ENCODE measurements at regions of chr14 and their contacts with region 1.

Region 1: GRCh38 chr14:50719911-50720759 is 52.0 kb upstream of the SAV1 start:
- DNase-seq: no peak
- ATAC-seq: no peak
- H3K4me3 ChIP-seq: no peak overlapping the region
- H3K4me3 Mint-ChIP-seq: no peak overlapping the region
- H3K27ac ChIP-seq: no peak overlapping the region
- H3K27ac Mint-ChIP-seq: peak overlapping the region; percentile 33
- H3K4me1 ChIP-seq: no peaks in the 10 kb centered on the region
- H3K4me1 Mint-ChIP-seq: peaks cover 2% of the 10 kb centered on the region
- H3K27me3 ChIP-seq: no peaks in the 10 kb centered on the region
- H3K27me3 Mint-ChIP-seq: no peaks in the 10 kb centered on the region
- CTCF ChIP-seq: no peak

Region 2: DNA sequence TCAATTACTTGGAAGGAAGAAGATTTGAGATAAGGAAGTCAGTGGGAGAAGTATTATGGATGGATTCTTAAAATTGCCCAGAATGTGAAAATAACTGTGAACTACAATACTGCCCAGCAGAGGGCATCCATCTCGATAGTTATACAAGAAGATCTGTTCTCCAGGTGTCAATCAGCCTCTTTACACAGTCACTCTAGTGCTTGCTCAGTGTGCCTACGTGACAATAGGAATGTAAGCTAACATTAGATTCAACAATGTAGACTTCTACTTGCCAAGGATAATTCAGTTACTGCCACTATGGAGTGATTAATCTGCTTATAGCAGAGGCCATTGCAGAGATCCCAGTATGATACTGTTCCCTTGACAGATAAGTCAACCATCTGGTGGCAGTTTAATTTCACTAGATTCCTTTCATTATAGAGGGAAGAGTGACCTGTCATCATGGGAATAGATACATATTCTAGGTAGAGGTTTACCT is 177.2 kb before region 1 on chr14:
- CTCF ChIA-PET with region 1: interaction called, 3 read pairs
- POLR2A ChIA-PET with region 1: no interaction called
- intact Hi-C with region 1: loop called (anchors 2 to 10 kb)
- DNase-seq: peak in 6 of 9 experiments; percentile 19 to 70 (median 28)
- ATAC-seq: peak; percentile 81
- H3K4me3 ChIP-seq: no peak overlapping the region
- H3K4me3 Mint-ChIP-seq: no peak overlapping the region
- H3K27ac ChIP-seq: no peak overlapping the region
- H3K27ac Mint-ChIP-seq: no peak overlapping the region
- H3K4me1 ChIP-seq: peaks cover 5% of the 10 kb centered on the region
- H3K4me1 Mint-ChIP-seq: peaks cover 11% of the 10 kb centered on the region
- H3K27me3 ChIP-seq: no peaks in the 10 kb centered on the region
- H3K27me3 Mint-ChIP-seq: no peaks in the 10 kb centered on the region
- CTCF ChIP-seq: peak; percentile 47

Region 3: GRCh38 chr14:50667996-50668825 is 51.9 kb before region 1 on chr14 and contains the start of gene SAV1:
- CTCF ChIA-PET with region 1: no interaction called
- POLR2A ChIA-PET with region 1: no interaction called
- intact Hi-C with region 1: loop called in 1 of 2 experiments (anchors 5 kb)
- DNase-seq: peak; percentile 13 to 71 (median 42)
- ATAC-seq: peak; percentile 38
- H3K4me3 ChIP-seq: peak within 1 kb of the TSS; percentile 55 to 60
- H3K4me3 Mint-ChIP-seq: no peak within 1 kb of the TSS
- H3K27ac ChIP-seq: peak within 1 kb of the TSS in 1 of 2 experiments; percentile 52
- H3K27ac Mint-ChIP-seq: peak within 1 kb of the TSS; percentile 84
- H3K4me1 ChIP-seq: peaks cover 16% of the 10 kb centered on the region
- H3K4me1 Mint-ChIP-seq: peaks cover 20% of the 10 kb centered on the region
- H3K27me3 ChIP-seq: no peaks in the 10 kb centered on the region
- H3K27me3 Mint-ChIP-seq: no peaks in the 10 kb centered on the region
- CTCF ChIP-seq: no peak
- total RNA-seq, gene SAV1: 13.1 to 13.4 TPM

Region 4: DNA sequence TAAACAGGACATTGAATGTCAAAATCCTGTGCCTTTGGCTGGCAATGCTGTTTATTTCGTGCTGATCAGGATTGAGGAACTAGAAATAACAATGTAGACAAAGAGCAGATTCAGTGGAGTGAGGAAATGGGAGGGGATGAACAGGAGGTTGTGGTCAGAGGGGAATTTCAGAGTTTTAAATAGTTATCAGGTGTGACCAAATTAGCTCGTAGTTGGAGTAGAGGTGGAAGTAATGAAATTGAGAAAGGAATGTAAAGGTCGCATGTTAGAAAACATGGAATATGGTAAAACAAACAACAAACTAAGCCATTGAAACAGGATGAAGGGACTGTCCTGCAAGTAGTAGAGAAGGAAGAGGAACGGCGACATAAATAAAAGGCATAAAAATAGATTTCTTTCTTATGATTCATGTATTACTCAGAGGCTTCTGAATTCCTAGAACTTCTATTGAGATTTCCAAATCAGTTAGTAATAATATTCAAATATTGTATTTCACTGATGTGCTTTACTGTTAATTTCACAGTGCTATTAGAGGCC is 42.5 kb before region 1 on chr14:
- CTCF ChIA-PET with region 1: no interaction called
- POLR2A ChIA-PET with region 1: no interaction called
- intact Hi-C with region 1: loop called in 1 of 2 experiments (anchors 1 kb)
- DNase-seq: peak in 1 of 9 experiments; percentile 17
- ATAC-seq: no peak
- H3K4me3 ChIP-seq: no peak overlapping the region
- H3K4me3 Mint-ChIP-seq: no peak overlapping the region
- H3K27ac ChIP-seq: no peak overlapping the region
- H3K27ac Mint-ChIP-seq: no peak overlapping the region
- H3K4me1 ChIP-seq: no peaks in the 10 kb centered on the region
- H3K4me1 Mint-ChIP-seq: peaks cover 4% of the 10 kb centered on the region
- H3K27me3 ChIP-seq: no peaks in the 10 kb centered on the region
- H3K27me3 Mint-ChIP-seq: no peaks in the 10 kb centered on the region
- CTCF ChIP-seq: no peak

Region 5: DNA sequence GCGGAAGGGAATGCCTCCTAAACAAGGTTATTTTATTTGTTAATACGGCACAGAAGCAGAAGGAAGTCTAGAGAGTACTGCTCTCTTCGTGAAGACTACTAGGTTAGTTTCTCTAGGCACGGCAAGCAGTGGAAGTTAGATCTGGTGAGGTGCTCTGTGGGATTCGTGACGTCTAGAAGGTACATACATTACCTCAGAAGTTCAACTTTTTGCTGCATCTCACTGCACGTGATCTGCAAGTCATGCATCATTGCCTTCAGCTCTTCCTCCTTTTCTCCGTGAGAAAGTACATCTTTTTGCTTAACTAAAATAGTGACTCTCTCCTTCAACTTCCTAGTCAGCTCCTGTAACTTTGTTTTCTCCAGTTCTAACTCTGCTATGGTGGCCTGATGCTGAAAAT is 36.2 kb after region 1 on chr14:
- CTCF ChIA-PET with region 1: interaction called, 3 read pairs
- POLR2A ChIA-PET with region 1: no interaction called
- intact Hi-C with region 1: loop called in 1 of 2 experiments (anchors 5 kb)
- DNase-seq: peak in 1 of 9 experiments; percentile 37
- ATAC-seq: no peak
- H3K4me3 ChIP-seq: no peak overlapping the region
- H3K4me3 Mint-ChIP-seq: no peak overlapping the region
- H3K27ac ChIP-seq: no peak overlapping the region
- H3K27ac Mint-ChIP-seq: no peak overlapping the region
- H3K4me1 ChIP-seq: no peaks in the 10 kb centered on the region
- H3K4me1 Mint-ChIP-seq: peaks cover 4% of the 10 kb centered on the region
- H3K27me3 ChIP-seq: no peaks in the 10 kb centered on the region
- H3K27me3 Mint-ChIP-seq: no peaks in the 10 kb centered on the region
- CTCF ChIP-seq: no peak